Naive thymus-derived CD4-positive, alpha-beta T cell (primary cell): ENCODE measurements at regions of chr10 and their contacts with region 1.

Region 1: DNA sequence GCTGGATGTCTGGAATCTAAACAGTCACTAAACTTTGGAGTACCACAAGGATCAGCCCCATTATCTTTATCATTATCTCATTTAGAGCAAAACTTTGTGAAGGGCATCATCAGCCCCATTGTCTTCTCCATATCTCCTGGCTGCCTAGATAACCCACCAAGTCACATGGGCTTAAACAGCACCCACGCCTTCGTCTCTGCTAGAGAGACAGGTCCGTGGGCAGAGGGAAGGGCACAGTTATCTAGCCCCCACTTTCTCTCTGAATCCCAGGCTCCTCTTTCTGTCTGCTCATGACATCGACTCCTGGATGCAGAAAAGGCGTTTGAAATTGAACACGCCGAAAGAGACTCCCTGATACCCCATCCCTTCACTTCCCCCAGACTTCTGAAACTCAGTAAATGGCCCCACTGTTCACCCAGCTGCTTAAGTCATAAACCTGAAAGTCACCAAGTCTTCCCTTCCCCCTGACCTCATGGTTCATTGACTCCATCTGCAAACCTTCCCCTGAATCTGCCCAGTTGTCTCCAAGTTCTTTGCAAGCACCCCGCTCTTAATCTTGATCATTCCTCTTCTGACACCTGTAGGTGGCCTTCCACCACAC is 20.9 kb upstream of the PARD3 start:
- DNase-seq: no peak
- ATAC-seq: no peak
- H3K4me3 ChIP-seq: no peak overlapping the region
- H3K4me3 Mint-ChIP-seq: no peak overlapping the region
- H3K27ac ChIP-seq: no peak overlapping the region
- H3K27ac Mint-ChIP-seq: no peak overlapping the region
- H3K4me1 ChIP-seq: no peaks in the 10 kb centered on the region
- H3K4me1 Mint-ChIP-seq: no peaks in the 10 kb centered on the region
- H3K27me3 ChIP-seq: no peaks in the 10 kb centered on the region
- H3K27me3 Mint-ChIP-seq: peaks cover 0 to 19% (median 5%) of the 10 kb centered on the region in 5 donors

Region 2: GRCh38 chr10:34800624-34801023 is 35.4 kb before region 1 on chr10:
- CTCF ChIA-PET with region 1: no interaction called
- POLR2A ChIA-PET with region 1: no interaction called
- intact Hi-C with region 1: loop called in 1 of 2 experiments (anchors 1 kb)
- DNase-seq: no peak
- ATAC-seq: no peak
- H3K4me3 ChIP-seq: no peak overlapping the region
- H3K4me3 Mint-ChIP-seq: no peak overlapping the region
- H3K27ac ChIP-seq: no peak overlapping the region
- H3K27ac Mint-ChIP-seq: no peak overlapping the region
- H3K4me1 ChIP-seq: no peaks in the 10 kb centered on the region
- H3K4me1 Mint-ChIP-seq: no peaks in the 10 kb centered on the region
- H3K27me3 ChIP-seq: no peaks in the 10 kb centered on the region
- H3K27me3 Mint-ChIP-seq: peaks cover 0 to 10% (median 5%) of the 10 kb centered on the region in 5 donors